Thyroid gland (tissue), 4 donors: ENCODE measurements at regions of chr5 and their contacts with region 1.

Region 1: GRCh38 chr5:33439905-33440481 is 772 bp upstream of the TARS1 start:
- DNase-seq: no peak
- H3K4me3 ChIP-seq: peak overlapping the region; percentile 41 to 70 (median 53)
- H3K27ac ChIP-seq: peak overlapping the region; percentile 26 to 85 (median 85)
- H3K4me1 ChIP-seq: peaks cover 14 to 16% of the 10 kb centered on the region in 2 donors
- H3K27me3 ChIP-seq: no peaks in the 10 kb centered on the region
- CTCF ChIP-seq: no peak
- POLR2A ChIP-seq: no peak

Region 2: DNA sequence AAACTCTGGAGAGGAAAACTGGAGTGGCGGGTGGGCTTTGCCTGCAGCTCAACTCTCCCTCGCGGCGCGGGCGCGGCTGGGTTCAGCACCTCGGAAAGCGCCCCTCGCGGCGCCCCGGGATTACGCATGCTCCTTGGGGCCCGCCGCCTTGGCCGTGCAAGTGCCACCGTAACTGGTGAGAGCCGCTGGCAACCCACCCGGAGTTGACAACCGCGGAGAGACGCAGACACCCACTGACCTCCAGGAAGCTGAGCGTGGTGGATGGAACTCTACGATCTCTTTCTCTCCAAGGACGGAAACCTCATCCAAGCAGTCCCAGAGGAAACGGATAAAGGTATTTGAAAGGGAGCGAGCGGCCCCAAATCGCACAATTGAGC is 496.0 kb after region 1 on chr5:
- intact Hi-C with region 1: loop called (anchors 10 kb)
- DNase-seq: peak; percentile 55 to 69
- H3K4me3 ChIP-seq: no peak overlapping the region
- H3K27ac ChIP-seq: no peak overlapping the region
- H3K4me1 ChIP-seq: peaks cover 0 to 12% of the 10 kb centered on the region in 2 donors
- H3K27me3 ChIP-seq: peaks cover 18% of the 10 kb centered on the region
- CTCF ChIP-seq: peak in 3 of 6 experiments; percentile 4 to 40 (median 33)
- POLR2A ChIP-seq: no peak